ENCODE measurements at regions of chr4 and their contacts with region 1.

Region 1: GRCh38 chr4:40924096-40924792 is 174.5 kb downstream of the NSUN7 start:
- DNase-seq: peak; percentile 91
- ATAC-seq: peak; percentile 87
- H3K4me3 Mint-ChIP-seq: no peak overlapping the region
- H3K27ac Mint-ChIP-seq: peak overlapping the region; percentile 90
- H3K4me1 Mint-ChIP-seq: peaks cover 10% of the 10 kb centered on the region
- H3K27me3 Mint-ChIP-seq: peaks cover 21% of the 10 kb centered on the region

Region 2: DNA sequence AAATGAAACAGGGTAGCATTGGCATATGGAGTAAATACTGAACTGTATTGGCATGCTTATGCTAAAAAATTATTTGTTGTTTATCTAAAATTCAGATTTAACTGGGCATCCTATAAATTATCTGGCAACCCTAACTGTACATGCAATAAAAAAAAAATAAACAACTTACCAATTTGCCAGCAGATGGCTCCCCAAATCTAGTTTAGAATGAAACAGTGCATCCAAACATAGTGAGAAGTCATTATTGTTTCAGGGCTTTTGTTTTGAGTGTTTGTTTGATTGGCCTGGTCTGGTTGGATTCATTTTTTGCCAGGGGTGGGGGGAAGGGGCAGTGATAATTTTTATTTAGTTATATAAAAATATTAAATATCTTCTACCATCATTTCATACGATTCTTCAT is 187.3 kb before region 1 on chr4:
- CTCF ChIA-PET with region 1: interaction called, 6 read pairs
- POLR2A ChIA-PET with region 1: no interaction called
- intact Hi-C with region 1: loop called in 1 of 2 experiments (anchors 1 kb)
- DNase-seq: no peak
- ATAC-seq: peak; percentile 30
- H3K4me3 Mint-ChIP-seq: no peak overlapping the region
- H3K27ac Mint-ChIP-seq: no peak overlapping the region
- H3K4me1 Mint-ChIP-seq: peaks cover 3% of the 10 kb centered on the region
- H3K27me3 Mint-ChIP-seq: peaks cover 6% of the 10 kb centered on the region

Region 3: GRCh38 chr4:40897557-40898203 is 26.6 kb before region 1 on chr4:
- CTCF ChIA-PET with region 1: interaction called, 25 read pairs
- POLR2A ChIA-PET with region 1: no interaction called
- intact Hi-C with region 1: no loop called
- DNase-seq: peak; percentile 83
- ATAC-seq: peak; percentile 74
- H3K4me3 Mint-ChIP-seq: peak overlapping the region; percentile 26
- H3K27ac Mint-ChIP-seq: no peak overlapping the region
- H3K4me1 Mint-ChIP-seq: peaks cover 4% of the 10 kb centered on the region
- H3K27me3 Mint-ChIP-seq: peaks cover 2% of the 10 kb centered on the region

Region 4: DNA sequence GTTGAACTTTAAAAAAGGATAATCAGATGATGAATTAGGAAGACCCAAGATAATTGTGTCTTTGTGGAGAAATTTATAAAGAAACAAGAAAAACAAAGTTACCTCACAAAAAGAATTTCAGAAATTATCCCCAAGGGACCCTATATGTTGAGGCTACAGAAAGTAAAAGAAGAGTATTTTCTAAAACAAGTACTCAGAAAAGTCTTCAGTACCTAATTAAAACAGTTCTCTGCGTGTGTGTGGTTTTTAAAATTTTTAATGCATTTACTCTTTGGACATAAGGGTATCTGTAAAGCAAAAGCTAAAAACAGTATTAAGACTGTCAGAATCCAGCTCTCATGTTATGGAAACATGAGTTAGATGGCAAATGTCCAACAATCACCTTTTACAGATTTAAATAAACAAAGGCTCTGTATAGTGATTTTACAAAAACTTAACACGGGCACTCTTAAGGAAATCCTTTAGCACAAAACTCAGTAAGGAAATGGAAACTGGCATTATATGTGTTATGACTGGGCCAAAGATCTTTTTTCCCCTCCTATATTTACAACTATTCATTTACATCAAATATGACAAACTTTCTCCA is 13.0 kb after region 1 on chr4:
- CTCF ChIA-PET with region 1: interaction called, 15 read pairs
- POLR2A ChIA-PET with region 1: no interaction called
- intact Hi-C with region 1: no loop called
- DNase-seq: no peak
- ATAC-seq: no peak
- H3K4me3 Mint-ChIP-seq: no peak overlapping the region
- H3K27ac Mint-ChIP-seq: no peak overlapping the region
- H3K4me1 Mint-ChIP-seq: no peaks in the 10 kb centered on the region
- H3K27me3 Mint-ChIP-seq: peaks cover 2% of the 10 kb centered on the region

Region 5: DNA sequence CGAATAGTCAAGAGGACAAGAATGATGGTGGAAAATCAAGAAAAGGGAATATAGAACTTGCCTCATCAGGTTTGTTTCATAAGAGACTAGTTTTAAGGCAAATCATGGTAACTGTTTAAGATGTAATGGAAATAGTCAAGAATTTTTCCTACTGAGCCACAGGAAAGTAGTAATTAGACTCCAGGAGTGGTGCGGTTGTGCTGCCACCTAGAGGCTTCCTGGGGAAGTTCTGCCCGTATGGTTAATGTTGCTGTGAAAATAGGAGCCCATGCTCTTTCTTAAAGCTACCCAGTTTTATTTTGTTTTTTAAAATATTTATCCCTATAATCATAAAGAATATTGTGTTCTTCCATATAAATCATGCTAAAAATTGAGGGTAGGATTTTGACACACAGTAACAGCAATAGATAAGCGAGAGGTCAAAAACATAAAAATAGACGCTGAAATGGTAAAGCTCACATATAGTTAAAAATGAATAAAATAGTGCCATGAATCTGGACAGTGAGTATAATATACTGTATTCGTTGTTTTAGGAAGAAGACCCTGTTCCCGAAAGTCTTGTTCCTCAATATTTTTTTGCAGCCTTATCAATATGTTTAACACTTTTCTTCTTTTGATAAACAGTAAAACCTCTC is 737.3 kb after region 1 on chr4:
- CTCF ChIA-PET with region 1: interaction called, 3 read pairs
- POLR2A ChIA-PET with region 1: no interaction called
- intact Hi-C with region 1: loop called in 1 of 2 experiments (anchors 1 kb)
- DNase-seq: peak; percentile 66
- ATAC-seq: no peak
- H3K4me3 Mint-ChIP-seq: no peak overlapping the region
- H3K27ac Mint-ChIP-seq: no peak overlapping the region
- H3K4me1 Mint-ChIP-seq: peaks cover 6% of the 10 kb centered on the region
- H3K27me3 Mint-ChIP-seq: peaks cover 9% of the 10 kb centered on the region